ENCODE measurements at regions of chr2 and their contacts with region 1.

Region 1: GRCh38 chr2:181104512-181105115 is 124.2 kb downstream of the UBE2E3 start:
- DNase-seq: peak in 4 of 9 experiments; percentile 26 to 83 (median 50)
- ATAC-seq: peak; percentile 44
- H3K4me3 ChIP-seq: no peak overlapping the region
- H3K4me3 Mint-ChIP-seq: no peak overlapping the region
- H3K27ac ChIP-seq: peak overlapping the region in 1 of 2 experiments; percentile 23
- H3K27ac Mint-ChIP-seq: peak overlapping the region; percentile 2
- H3K4me1 ChIP-seq: peaks cover 33% of the 10 kb centered on the region
- H3K4me1 Mint-ChIP-seq: peaks cover 42% of the 10 kb centered on the region
- H3K27me3 ChIP-seq: no peaks in the 10 kb centered on the region
- H3K27me3 Mint-ChIP-seq: no peaks in the 10 kb centered on the region
- CTCF ChIP-seq: peak; percentile 81

Region 2: DNA sequence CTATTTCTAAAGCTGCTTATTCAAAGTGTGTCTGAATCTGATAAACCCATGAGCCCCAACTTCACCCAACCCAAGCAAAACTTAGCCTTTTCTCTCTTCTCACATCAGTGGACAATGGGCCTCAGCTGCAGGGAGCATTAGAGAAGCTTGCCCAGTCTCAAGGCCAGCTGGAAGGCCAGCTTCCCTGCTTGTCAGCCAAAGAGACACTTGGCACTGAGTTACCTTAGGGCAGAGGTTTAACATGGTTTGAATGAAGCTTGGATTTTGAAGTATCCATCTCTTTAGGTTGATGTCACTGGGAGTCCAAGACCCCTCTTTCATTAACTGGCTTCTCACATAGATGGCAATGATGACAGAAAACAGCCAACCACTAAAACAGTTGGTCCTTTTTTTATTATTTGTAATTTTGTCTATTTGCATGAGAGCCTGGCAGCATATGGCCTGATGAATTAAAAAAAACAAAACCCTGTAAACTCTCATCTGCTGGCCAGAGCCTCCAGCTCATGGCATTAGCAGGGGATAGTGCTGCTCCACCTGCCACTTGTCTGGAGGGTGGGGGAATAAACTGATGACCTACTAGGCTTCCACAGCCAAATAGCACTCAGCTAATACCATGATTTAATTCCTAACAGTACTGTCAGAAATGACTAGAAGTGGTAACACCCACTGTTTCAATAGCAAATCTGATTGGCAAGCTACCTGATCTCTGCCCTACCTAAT is 12.8 kb after region 1 on chr2:
- CTCF ChIA-PET with region 1: interaction called, 13 read pairs
- POLR2A ChIA-PET with region 1: interaction called, 5 read pairs
- intact Hi-C with region 1: loop called in 1 of 2 experiments (anchors 1 kb)
- DNase-seq: no peak
- ATAC-seq: no peak
- H3K4me3 ChIP-seq: no peak overlapping the region
- H3K4me3 Mint-ChIP-seq: no peak overlapping the region
- H3K27ac ChIP-seq: no peak overlapping the region
- H3K27ac Mint-ChIP-seq: no peak overlapping the region
- H3K4me1 ChIP-seq: peaks cover 18% of the 10 kb centered on the region
- H3K4me1 Mint-ChIP-seq: peaks cover 36% of the 10 kb centered on the region
- H3K27me3 ChIP-seq: no peaks in the 10 kb centered on the region
- H3K27me3 Mint-ChIP-seq: no peaks in the 10 kb centered on the region
- CTCF ChIP-seq: no peak

Region 3: GRCh38 chr2:181140414-181140813 is 35.8 kb after region 1 on chr2:
- CTCF ChIA-PET with region 1: interaction called, 53 read pairs
- POLR2A ChIA-PET with region 1: no interaction called
- intact Hi-C with region 1: loop called in 1 of 2 experiments (anchors 2 kb)
- DNase-seq: peak in 2 of 9 experiments; percentile 60 to 73
- ATAC-seq: peak; percentile 15
- H3K4me3 ChIP-seq: no peak overlapping the region
- H3K4me3 Mint-ChIP-seq: peak overlapping the region; percentile 80
- H3K27ac ChIP-seq: peak overlapping the region; percentile 58 to 73
- H3K27ac Mint-ChIP-seq: peak overlapping the region; percentile 99
- H3K4me1 ChIP-seq: peaks cover 62% of the 10 kb centered on the region
- H3K4me1 Mint-ChIP-seq: peaks cover 79% of the 10 kb centered on the region
- H3K27me3 ChIP-seq: no peaks in the 10 kb centered on the region
- H3K27me3 Mint-ChIP-seq: no peaks in the 10 kb centered on the region
- CTCF ChIP-seq: no peak

Region 4: DNA sequence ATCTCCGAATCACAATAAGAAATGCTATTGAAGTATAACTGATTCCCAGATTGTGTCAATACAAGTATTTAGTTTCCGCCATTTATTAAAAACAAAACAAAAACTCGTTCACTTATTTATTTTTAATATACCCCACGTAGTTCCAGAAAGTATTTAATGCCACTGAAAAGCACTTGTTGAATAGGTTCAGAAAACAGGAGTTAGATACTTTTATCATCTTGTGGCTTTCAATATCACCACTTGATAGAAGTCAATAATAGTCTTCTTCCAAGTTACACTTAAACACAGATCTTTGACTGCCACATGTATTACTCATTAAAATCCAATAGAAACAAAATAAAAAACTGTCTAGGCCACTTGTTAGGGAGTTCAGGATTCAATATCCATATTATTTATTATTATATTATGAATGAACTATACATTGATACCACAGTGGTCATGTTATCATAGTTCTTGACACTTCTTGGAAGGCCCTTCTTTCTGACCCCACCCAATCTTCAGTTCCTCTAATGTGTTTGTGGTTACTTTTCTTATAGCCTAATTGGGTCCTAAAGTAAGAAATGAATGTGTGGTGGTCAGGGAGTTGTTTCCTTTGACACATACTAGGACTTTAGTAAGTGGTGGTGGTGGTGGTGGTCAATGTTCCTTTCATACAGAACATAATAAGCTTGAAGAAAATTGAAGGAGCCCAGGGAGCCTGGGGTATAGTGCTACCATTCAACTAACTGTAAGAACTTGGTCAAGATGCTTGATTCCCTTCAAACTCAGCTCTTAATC is 131.3 kb after region 1 on chr2:
- CTCF ChIA-PET with region 1: no interaction called
- POLR2A ChIA-PET with region 1: no interaction called
- intact Hi-C with region 1: loop called in 1 of 2 experiments (anchors 5 kb)
- DNase-seq: no peak
- ATAC-seq: no peak
- H3K4me3 ChIP-seq: no peak overlapping the region
- H3K4me3 Mint-ChIP-seq: no peak overlapping the region
- H3K27ac ChIP-seq: no peak overlapping the region
- H3K27ac Mint-ChIP-seq: no peak overlapping the region
- H3K4me1 ChIP-seq: peaks cover 1% of the 10 kb centered on the region
- H3K4me1 Mint-ChIP-seq: peaks cover 36% of the 10 kb centered on the region
- H3K27me3 ChIP-seq: no peaks in the 10 kb centered on the region
- H3K27me3 Mint-ChIP-seq: no peaks in the 10 kb centered on the region
- CTCF ChIP-seq: no peak

Region 5: GRCh38 chr2:181281206-181281832 is 176.7 kb after region 1 on chr2:
- CTCF ChIA-PET with region 1: interaction called, 5 read pairs
- POLR2A ChIA-PET with region 1: no interaction called
- intact Hi-C with region 1: loop called (anchors 5 kb)
- DNase-seq: peak in 2 of 9 experiments; percentile 67 to 83
- ATAC-seq: peak; percentile 89
- H3K4me3 ChIP-seq: no peak overlapping the region
- H3K4me3 Mint-ChIP-seq: peak overlapping the region; percentile 6
- H3K27ac ChIP-seq: peak overlapping the region in 1 of 2 experiments; percentile 39
- H3K27ac Mint-ChIP-seq: peak overlapping the region; percentile 86
- H3K4me1 ChIP-seq: peaks cover 29% of the 10 kb centered on the region
- H3K4me1 Mint-ChIP-seq: peaks cover 54% of the 10 kb centered on the region
- H3K27me3 ChIP-seq: no peaks in the 10 kb centered on the region
- H3K27me3 Mint-ChIP-seq: no peaks in the 10 kb centered on the region
- CTCF ChIP-seq: no peak

Region 6: GRCh38 chr2:181326661-181327060 is 222.0 kb after region 1 on chr2:
- CTCF ChIA-PET with region 1: interaction called, 10 read pairs
- POLR2A ChIA-PET with region 1: no interaction called
- intact Hi-C with region 1: no loop called
- DNase-seq: peak in 1 of 9 experiments; percentile 29
- ATAC-seq: no peak
- H3K4me3 ChIP-seq: no peak overlapping the region
- H3K4me3 Mint-ChIP-seq: no peak overlapping the region
- H3K27ac ChIP-seq: no peak overlapping the region
- H3K27ac Mint-ChIP-seq: no peak overlapping the region
- H3K4me1 ChIP-seq: peaks cover 4% of the 10 kb centered on the region
- H3K4me1 Mint-ChIP-seq: peaks cover 16% of the 10 kb centered on the region
- H3K27me3 ChIP-seq: no peaks in the 10 kb centered on the region
- H3K27me3 Mint-ChIP-seq: no peaks in the 10 kb centered on the region
- CTCF ChIP-seq: no peak

Region 7: GRCh38 chr2:181715033-181715630 is 610.5 kb after region 1 on chr2:
- CTCF ChIA-PET with region 1: interaction called, 17 read pairs
- POLR2A ChIA-PET with region 1: no interaction called
- intact Hi-C with region 1: no loop called
- DNase-seq: peak; percentile 31 to 83 (median 71)
- ATAC-seq: peak; percentile 83
- H3K4me3 ChIP-seq: no peak overlapping the region
- H3K4me3 Mint-ChIP-seq: no peak overlapping the region
- H3K27ac ChIP-seq: no peak overlapping the region
- H3K27ac Mint-ChIP-seq: no peak overlapping the region
- H3K4me1 ChIP-seq: no peaks in the 10 kb centered on the region
- H3K4me1 Mint-ChIP-seq: no peaks in the 10 kb centered on the region
- H3K27me3 ChIP-seq: no peaks in the 10 kb centered on the region
- H3K27me3 Mint-ChIP-seq: peaks cover 2% of the 10 kb centered on the region
- CTCF ChIP-seq: peak; percentile 69

Measured in CD8-positive, alpha-beta T cell (primary cell).